PC-9 (cell line): ENCODE measurements at regions of chr7 and their contacts with region 1.

Region 1: DNA sequence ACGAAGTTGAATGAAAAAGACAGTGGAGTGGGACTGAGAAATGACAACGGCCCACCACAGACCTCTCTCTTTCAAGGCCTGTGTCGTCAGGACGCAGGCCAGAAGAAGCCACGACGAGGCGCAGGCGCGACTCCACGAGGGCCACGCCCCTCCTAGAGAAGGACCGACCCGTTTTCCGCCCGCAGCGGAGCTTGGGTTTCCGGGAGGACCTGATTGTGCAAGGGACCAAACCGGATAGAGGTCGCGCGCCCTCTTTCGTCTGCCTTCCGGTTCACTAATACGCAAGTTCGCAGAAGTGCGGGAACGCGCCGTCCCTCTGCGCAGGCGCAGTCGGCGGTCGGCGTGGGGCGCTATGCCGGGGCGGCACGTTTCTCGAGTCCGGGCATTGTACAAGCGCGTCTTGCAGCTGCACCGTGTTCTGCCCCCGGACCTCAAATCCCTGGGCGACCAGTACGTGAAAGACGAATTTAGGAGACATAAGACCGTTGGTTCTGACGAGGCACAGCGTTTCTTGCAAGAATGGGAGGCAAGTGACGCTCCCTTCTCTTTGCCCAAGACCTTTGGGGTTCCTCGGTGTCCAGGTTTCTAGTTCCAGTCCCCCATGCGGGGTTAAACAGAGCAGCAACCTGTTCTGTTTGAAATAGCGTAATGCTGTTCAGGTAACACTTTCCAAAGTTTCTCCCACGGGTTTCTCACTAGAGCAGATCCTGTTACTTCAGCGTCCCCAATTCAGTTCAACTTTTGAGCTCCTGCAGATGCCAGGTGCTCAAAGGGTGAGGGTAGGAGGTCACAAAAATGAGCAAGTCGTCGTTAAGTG is at the start of gene SDHAF3:
- DNase-seq: peak; percentile 89 to 98
- H3K4me3 ChIP-seq: peak within 1 kb of the TSS; percentile 82
- H3K27ac ChIP-seq: peak within 1 kb of the TSS; percentile 49
- H3K4me1 ChIP-seq: peaks cover 15% of the 10 kb centered on the region
- H3K27me3 ChIP-seq: no peaks in the 10 kb centered on the region
- CTCF ChIP-seq: peak; percentile 44; the same call in 1 of the 2 replicates
- total RNA-seq, gene SDHAF3: 23.7 and 27.4 TPM in 2 replicates

Region 2: DNA sequence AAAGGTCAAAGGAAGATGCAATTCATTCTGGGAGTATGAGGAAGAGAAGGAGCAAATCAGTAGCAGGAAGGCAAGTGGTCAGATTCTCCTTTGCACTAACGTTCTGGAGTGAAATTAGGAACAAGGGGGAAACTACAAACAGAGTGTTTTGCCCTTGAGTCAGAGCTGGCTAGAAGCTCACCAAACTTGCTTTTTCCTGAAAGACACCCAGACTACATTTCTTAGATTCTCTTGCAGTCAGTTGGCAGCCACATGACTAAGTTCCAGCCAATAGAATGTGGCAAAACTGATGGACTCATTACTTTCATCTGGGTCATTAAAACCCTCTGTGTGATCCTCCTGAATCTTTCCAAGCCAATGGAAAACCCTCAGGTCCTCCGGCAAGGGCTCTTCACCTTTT is 74.3 kb before region 1 on chr7:
- CTCF ChIA-PET with region 1: no interaction called
- POLR2A ChIA-PET with region 1: interaction called, 11 read pairs
- intact Hi-C with region 1: no loop called
- DNase-seq: peak in 1 of 2 experiments; percentile 43
- H3K4me3 ChIP-seq: no peak overlapping the region
- H3K27ac ChIP-seq: no peak overlapping the region
- H3K4me1 ChIP-seq: peaks cover 7% of the 10 kb centered on the region; the same call in 1 of the 2 replicates
- H3K27me3 ChIP-seq: no peaks in the 10 kb centered on the region
- CTCF ChIP-seq: no peak

Region 3: GRCh38 chr7:97872025-97872669 is 754.6 kb after region 1 on chr7 and contains the start of gene ASNS:
- CTCF ChIA-PET with region 1: no interaction called
- POLR2A ChIA-PET with region 1: interaction called, 10 read pairs
- intact Hi-C with region 1: loop called (anchors 1 kb)
- DNase-seq: peak; percentile 86 to 97
- H3K4me3 ChIP-seq: peak within 1 kb of the TSS; percentile 85
- H3K27ac ChIP-seq: peak within 1 kb of the TSS; percentile 79
- H3K4me1 ChIP-seq: peaks cover 18% of the 10 kb centered on the region
- H3K27me3 ChIP-seq: no peaks in the 10 kb centered on the region
- CTCF ChIP-seq: no peak
- total RNA-seq, gene ASNS: 173 and 199 TPM in 2 replicates